ENCODE measurements at regions of chr1 and their contacts with region 1.

Region 1: DNA sequence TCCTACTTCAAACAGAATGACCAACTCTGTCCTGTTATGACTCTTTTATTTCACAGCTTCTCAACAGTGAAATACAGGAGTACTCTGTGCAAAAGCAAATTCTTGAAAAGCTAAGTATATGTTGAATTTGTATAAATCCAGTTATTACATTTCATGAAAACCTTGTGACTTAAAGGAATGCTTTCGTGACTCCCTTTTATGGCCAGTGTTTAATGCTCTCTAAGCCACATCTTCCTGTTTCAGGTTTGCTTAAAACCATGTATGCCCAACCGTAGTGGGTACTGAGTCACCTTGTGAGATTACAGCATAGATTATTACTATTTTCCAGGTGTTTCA is 40.2 kb upstream of the KIF1B start:
- DNase-seq: no peak
- H3K4me3 ChIP-seq: no peak overlapping the region
- H3K27me3 ChIP-seq: no peaks in the 10 kb centered on the region
- CTCF ChIP-seq: no peak

Region 2: GRCh38 chr1:10152709-10153284 is 17.4 kb before region 1 on chr1:
- CTCF ChIA-PET with region 1: interaction called, 4 read pairs
- POLR2A ChIA-PET with region 1: interaction called, 10 read pairs
- DNase-seq: no peak
- H3K4me3 ChIP-seq: no peak overlapping the region
- H3K27me3 ChIP-seq: no peaks in the 10 kb centered on the region
- CTCF ChIP-seq: peak; percentile 77

Region 3: GRCh38 chr1:10186331-10187025 is 16.3 kb after region 1 on chr1:
- CTCF ChIA-PET with region 1: no interaction called
- POLR2A ChIA-PET with region 1: interaction called, 10 read pairs
- DNase-seq: peak; percentile 67
- H3K4me3 ChIP-seq: no peak overlapping the region
- H3K27me3 ChIP-seq: no peaks in the 10 kb centered on the region
- CTCF ChIP-seq: no peak

Region 4: GRCh38 chr1:10438677-10439163 is 268.5 kb after region 1 on chr1:
- CTCF ChIA-PET with region 1: no interaction called
- POLR2A ChIA-PET with region 1: no interaction called
- DNase-seq: no peak
- H3K4me3 ChIP-seq: no peak overlapping the region
- H3K27me3 ChIP-seq: no peaks in the 10 kb centered on the region
- CTCF ChIP-seq: no peak